PC-9 (cell line): ENCODE measurements at regions of chr10 and their contacts with region 1.

Region 1: DNA sequence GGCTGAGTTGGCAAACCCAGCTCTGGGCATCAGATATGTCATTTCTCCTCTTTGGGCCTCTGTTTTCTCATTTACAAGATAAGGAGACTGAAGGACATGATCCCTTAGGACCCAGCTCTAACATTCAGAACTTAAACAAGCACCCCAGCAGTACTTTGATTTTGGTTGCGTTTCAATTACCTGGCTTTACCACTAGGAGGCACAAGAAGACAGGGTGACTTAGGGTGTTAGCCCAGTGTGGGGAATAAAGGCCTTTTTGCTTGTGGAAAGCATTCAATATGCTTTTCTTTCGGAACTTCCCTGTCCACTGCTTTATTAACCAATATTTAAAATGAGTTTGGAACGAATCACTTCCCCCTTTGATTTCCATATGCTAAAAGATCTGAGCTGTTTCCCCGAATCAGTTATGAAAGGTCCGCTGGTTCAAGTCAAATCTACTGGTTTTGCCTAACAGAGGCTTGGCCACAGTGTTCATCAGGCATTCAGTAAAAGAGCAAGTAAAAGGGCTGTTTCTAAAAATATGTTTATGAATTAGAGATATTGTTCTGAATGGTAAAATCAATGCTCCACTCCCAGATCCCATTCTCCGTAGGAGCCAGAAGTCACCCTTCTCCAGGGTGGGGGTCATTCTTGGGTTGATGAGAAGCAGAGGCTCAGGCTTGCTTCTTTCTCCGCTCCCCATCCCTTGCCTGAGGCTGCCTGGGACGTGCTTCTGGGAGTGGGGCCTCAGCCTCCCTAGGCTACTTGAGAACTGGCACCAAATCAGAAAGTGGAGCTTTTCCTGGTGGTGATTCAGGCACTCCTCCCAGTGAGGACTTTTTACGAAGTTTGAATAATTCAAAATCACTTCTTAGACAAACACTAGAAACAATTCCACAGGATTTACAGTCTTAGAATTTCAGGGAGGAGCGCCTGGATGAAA is 105.5 kb downstream of the MYOF start:
- DNase-seq: peak; percentile 59 to 76
- H3K4me3 ChIP-seq: peak overlapping the region; percentile 35; the same call in 1 of the 2 replicates
- H3K27ac ChIP-seq: peak overlapping the region; percentile 90
- H3K4me1 ChIP-seq: peaks cover 21% of the 10 kb centered on the region
- H3K27me3 ChIP-seq: no peaks in the 10 kb centered on the region
- CTCF ChIP-seq: peak; percentile 89

Region 2: DNA sequence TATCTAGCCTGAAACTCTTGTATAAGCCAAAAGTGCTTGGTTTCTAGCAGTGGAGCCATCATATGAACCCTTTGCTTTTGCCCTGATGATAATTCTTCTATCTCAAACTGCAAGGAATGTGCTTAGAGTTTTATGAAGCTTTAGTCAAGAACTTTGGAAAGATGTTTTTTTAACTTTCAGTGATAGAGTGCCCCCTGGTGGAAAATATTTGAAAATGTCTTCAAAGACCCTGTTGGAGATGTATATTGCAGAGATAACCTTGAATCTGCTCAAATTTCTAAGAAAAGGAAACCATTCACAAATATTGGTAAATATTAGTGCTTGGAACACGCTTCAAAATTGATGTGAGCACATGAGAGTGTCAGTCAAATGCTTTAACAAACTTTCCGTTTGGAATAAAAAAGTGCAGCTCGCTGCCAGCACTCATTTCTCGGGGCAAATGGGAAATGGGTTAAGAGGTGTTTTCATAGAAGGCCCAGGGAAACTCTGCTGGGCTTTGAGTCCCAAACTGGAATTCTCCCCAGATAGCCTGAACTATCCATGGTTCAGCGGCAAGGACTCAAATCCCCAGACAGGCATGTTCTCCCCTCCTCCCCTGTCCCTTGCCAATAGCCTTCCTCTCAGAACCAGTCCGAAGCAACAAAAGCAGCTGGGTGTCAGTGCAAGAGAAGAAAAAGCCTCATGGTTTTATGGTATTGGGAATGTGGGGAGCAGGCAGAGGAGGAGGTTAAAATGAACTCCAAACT is 23.8 kb before region 1 on chr10:
- CTCF ChIA-PET with region 1: no interaction called
- POLR2A ChIA-PET with region 1: no interaction called
- intact Hi-C with region 1: no loop called
- DNase-seq: no peak
- H3K4me3 ChIP-seq: no peak overlapping the region
- H3K27ac ChIP-seq: no peak overlapping the region
- H3K4me1 ChIP-seq: no peaks in the 10 kb centered on the region
- H3K27me3 ChIP-seq: no peaks in the 10 kb centered on the region
- CTCF ChIP-seq: peak; percentile 79

Region 3: GRCh38 chr10:93458821-93459257 is 82.2 kb after region 1 on chr10:
- CTCF ChIA-PET with region 1: interaction called, 4 read pairs
- POLR2A ChIA-PET with region 1: no interaction called
- intact Hi-C with region 1: loop called (anchors 2 kb)
- DNase-seq: peak; percentile 86 to 91
- H3K4me3 ChIP-seq: no peak overlapping the region
- H3K27ac ChIP-seq: peak overlapping the region; percentile 90
- H3K4me1 ChIP-seq: peaks cover 14% of the 10 kb centered on the region
- H3K27me3 ChIP-seq: no peaks in the 10 kb centered on the region
- CTCF ChIP-seq: no peak

Region 4: GRCh38 chr10:93496322-93497041 is 119.8 kb after region 1 on chr10 and contains the start of gene CEP55:
- CTCF ChIA-PET with region 1: no interaction called
- POLR2A ChIA-PET with region 1: interaction called, 4 read pairs
- intact Hi-C with region 1: loop called (anchors 5 kb)
- DNase-seq: peak; percentile 66 to 92
- H3K4me3 ChIP-seq: peak within 1 kb of the TSS; percentile 58
- H3K27ac ChIP-seq: no peak within 1 kb of the TSS
- H3K4me1 ChIP-seq: no peaks in the 10 kb centered on the region
- H3K27me3 ChIP-seq: no peaks in the 10 kb centered on the region
- CTCF ChIP-seq: no peak
- total RNA-seq, gene CEP55: 29.6 and 38.9 TPM in 2 replicates

Region 5: GRCh38 chr10:93515071-93516005 is 138.7 kb after region 1 on chr10:
- CTCF ChIA-PET with region 1: interaction called, 3 read pairs
- POLR2A ChIA-PET with region 1: no interaction called
- intact Hi-C with region 1: loop called (anchors 1 kb)
- DNase-seq: no peak
- H3K4me3 ChIP-seq: no peak overlapping the region
- H3K27ac ChIP-seq: no peak overlapping the region
- H3K4me1 ChIP-seq: no peaks in the 10 kb centered on the region
- H3K27me3 ChIP-seq: no peaks in the 10 kb centered on the region
- CTCF ChIP-seq: no peak

Region 6: DNA sequence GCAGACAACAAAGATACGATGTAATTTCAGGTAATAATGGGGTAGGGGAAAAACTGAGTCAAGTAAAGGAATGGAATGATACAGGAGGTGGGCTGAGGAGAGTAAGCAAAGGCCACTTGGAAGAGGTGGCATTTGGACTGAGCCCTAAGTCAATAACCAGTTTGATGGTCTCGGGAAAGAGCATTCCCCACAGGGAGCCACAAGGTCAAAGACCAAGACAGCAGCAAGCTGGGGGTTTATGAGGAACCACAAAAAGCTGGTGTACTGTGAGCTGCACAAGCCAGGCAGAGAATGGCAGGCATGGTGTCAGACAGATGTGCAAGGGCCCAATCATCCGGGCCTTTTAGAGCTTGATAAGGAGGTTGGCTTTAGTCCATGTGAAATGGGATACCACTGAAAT is 887.5 kb after region 1 on chr10:
- CTCF ChIA-PET with region 1: no interaction called
- POLR2A ChIA-PET with region 1: no interaction called
- intact Hi-C with region 1: no loop called
- DNase-seq: no peak
- H3K4me3 ChIP-seq: no peak overlapping the region
- H3K27ac ChIP-seq: no peak overlapping the region
- H3K4me1 ChIP-seq: no peaks in the 10 kb centered on the region
- H3K27me3 ChIP-seq: no peaks in the 10 kb centered on the region
- CTCF ChIP-seq: no peak